ENCODE measurements at regions of chr14 and their contacts with region 1.

Region 1: GRCh38 chr14:51922624-51923023 is 62.2 kb downstream of the GNG2 start:
- DNase-seq: no peak

Region 2: DNA sequence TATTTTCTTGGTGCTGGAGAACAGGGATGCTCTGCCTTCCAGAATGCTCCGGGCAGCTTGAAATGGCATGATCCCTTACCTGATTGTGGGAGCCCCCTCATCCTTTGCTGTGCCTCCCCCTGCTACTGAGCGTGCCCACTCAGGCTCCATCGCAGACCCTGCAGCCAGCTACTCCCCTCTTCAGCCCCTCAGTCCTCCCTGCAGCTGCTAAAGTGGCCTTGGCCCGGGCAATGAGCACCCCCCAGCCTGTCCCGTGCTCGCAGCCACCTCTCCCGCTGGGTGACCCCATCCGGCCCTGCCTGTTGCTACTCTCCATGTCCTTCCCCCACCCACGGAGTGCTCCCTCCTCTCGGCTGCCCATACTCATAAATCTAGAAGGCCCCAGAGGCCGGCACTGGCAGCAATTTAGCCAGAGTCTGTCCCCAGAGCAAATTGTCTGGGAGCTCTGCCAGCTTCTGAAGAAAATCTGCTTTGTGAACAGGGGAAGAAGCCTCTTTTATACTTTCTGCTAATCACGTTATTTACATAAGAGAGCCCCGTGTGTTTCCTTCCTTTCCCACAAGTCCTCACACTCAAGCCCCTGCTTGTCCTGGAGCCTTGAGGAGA is 414.6 kb before region 1 on chr14:
- intact Hi-C with region 1: no loop called
- DNase-seq: no peak

Region 3: DNA sequence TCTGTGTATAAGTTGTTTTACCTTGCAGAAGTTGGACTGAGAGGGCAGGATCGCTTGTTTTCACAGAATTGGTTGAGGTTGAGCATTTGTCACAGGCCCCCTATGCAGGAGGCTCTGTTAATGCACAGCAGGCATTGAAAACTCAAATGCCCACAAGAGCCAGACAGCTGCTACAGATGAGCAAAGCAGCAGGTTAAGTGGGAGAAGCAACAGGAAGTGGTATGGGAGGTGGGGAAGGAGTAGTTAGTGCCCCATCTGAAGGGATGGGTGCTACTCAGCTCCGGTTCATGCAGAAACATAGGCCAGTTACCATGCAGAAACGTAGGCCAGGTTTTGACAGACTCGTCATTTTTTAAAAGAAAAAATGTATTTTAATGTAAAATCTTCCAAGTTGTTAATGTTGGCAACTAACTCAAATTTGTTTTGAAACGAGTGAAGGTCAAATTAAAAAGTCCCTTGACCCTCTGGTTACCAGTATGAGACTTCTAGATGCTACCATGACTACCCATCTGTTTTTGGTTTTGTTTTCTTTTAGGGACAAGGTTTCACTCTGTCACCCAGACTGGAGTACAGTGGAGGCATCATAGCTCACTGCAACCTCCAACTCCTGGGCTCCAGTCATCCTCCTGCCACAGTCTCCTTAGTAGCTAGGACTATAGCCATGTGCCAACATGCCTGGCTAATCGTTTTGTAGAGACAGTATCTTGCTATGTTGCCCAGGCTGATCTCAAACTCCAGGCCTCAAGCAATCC is 355.6 kb before region 1 on chr14:
- intact Hi-C with region 1: no loop called
- DNase-seq: no peak

Region 4: DNA sequence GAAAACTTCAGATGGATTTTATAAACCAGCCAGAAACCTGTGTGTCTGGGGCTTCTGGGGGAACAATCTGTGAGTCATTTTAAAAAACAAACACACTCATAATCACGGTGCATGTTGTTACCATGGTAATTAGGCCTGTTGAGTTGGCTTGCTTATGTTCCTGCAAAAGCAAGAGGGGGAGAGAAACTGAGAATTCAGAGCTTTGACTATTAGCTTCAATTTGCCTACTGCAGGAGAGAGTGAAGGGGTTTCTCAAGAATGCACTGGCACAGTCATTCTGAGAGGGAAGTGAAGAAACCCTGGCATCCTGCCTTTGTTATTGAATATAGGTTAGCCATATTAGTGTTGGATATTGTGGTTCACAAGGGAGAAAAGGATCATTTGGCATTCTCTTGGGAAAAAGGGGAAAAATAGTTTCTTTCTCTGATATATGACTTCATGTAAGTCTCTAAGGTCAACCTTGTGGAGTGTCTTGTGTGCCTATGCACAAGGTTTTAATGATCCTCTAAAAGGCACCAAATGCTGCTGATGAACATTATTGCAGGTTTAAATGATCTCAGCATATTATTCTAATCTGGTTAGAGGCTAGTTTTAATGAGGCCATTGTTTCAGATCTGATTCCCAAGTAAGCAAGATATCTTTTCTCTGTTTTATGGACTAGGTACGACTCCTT is 49.3 kb before region 1 on chr14:
- intact Hi-C with region 1: loop called in 1 of 2 experiments (anchors 2 kb)
- DNase-seq: no peak

Region 5: GRCh38 chr14:51889851-51890250 is 32.8 kb before region 1 on chr14:
- intact Hi-C with region 1: no loop called
- DNase-seq: no peak